ENCODE measurements at regions of chr15 and their contacts with region 1.

Region 1: GRCh38 chr15:63752075-63752684 is 81.6 kb downstream of the HERC1 start:
- DNase-seq: no peak
- ATAC-seq: peak; percentile 73 to 78
- H3K4me3 ChIP-seq: no peak overlapping the region
- H3K27ac ChIP-seq: no peak overlapping the region
- H3K4me1 ChIP-seq: no peaks in the 10 kb centered on the region
- H3K27me3 ChIP-seq: no peaks in the 10 kb centered on the region

Region 2: GRCh38 chr15:63473999-63474809 is 278.0 kb before region 1 on chr15:
- intact Hi-C with region 1: no loop called
- DNase-seq: no peak
- ATAC-seq: peak; percentile 18 to 38
- H3K4me3 ChIP-seq: no peak overlapping the region
- H3K27ac ChIP-seq: no peak overlapping the region
- H3K4me1 ChIP-seq: peaks cover 4% of the 10 kb centered on the region
- H3K27me3 ChIP-seq: no peaks in the 10 kb centered on the region

Region 3: DNA sequence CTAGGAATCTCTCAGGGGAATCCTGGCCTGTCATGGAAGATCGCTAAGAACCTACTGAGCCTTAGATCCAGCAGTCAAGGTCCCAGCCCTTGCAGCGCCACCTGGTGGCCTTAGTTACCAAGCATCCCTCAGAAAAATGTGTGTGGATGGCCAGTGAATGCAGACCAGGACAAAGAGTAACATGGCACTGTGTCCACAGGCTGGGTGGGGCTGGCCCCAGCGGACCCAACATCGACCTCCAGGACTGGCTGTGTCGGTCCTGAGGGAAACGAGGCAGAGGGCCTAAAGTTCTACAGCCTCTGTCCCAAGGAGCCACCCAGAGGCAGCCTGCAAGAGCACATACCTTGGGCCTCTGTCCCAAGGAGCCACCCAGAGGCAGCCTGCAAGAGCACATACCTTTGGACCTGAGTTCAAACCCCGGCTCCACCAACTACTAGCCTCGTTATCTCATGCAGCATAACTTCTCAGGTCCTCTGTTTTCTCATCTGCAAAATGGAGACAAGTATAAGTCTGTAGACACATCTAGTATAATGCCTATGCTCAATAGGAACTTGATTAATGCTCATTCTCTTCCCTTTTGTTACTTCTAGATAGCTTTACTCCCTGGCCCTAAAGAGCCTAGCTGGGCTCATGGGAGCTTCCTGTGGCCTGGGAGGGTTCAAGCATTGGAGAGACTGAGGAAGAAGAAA is 139.0 kb after region 1 on chr15:
- intact Hi-C with region 1: loop called (anchors 2 to 10 kb)
- DNase-seq: peak; percentile 78 to 92 (median 90)
- ATAC-seq: peak; percentile 51 to 70
- H3K4me3 ChIP-seq: no peak overlapping the region
- H3K27ac ChIP-seq: no peak overlapping the region
- H3K4me1 ChIP-seq: no peaks in the 10 kb centered on the region
- H3K27me3 ChIP-seq: no peaks in the 10 kb centered on the region

Region 4: DNA sequence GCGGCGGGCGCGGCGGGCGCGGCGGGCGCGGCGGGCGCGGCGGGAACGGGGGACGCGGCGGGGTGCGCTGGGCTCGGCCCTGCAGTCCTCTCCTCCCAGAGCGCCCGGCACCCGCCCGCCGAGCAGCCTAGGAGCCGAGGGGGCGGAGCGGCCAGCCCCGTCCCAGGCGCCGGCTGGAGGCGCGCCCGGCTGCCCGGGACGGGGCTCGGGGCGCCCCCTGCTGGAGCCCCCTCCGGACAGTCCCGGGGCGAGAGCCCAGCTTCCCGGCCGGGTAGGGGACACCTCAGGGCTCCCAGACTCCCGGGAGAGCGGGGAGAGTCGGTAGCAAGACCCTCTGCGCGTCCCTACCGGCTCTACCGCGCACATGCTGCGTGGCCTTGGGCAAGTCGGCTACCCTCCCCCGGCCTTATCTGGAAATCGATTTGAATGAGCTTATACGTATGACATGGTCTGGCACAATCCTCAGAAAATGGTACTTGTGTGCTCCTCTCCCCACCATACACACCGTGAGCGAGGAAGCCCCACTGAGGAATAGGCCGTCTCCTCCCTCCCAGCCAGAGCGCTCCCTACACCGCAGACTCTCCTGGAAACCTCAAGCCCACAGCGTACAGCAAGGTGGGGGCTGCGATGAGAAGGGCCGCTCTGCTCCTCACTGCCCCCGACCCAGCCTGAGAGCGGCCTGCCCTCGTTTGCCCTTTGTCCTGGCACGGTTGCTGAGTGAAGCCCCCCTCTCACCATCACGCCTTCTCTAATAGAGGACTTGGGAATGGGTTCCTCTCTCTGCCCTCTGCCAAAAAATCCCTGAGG is 294.4 kb after region 1 on chr15 and contains the start of gene DAPK2:
- intact Hi-C with region 1: loop called in 1 of 4 experiments (anchors 5 kb)
- DNase-seq: peak; percentile 79 to 94 (median 91)
- ATAC-seq: peak; percentile 83 to 89
- H3K4me3 ChIP-seq: peak within 1 kb of the TSS; percentile 88
- H3K27ac ChIP-seq: peak within 1 kb of the TSS; percentile 57
- H3K4me1 ChIP-seq: peaks cover 11% of the 10 kb centered on the region
- H3K27me3 ChIP-seq: no peaks in the 10 kb centered on the region
- total RNA-seq, gene DAPK2: 83.5 to 95.1 (median 88.1) TPM

Region 5: DNA sequence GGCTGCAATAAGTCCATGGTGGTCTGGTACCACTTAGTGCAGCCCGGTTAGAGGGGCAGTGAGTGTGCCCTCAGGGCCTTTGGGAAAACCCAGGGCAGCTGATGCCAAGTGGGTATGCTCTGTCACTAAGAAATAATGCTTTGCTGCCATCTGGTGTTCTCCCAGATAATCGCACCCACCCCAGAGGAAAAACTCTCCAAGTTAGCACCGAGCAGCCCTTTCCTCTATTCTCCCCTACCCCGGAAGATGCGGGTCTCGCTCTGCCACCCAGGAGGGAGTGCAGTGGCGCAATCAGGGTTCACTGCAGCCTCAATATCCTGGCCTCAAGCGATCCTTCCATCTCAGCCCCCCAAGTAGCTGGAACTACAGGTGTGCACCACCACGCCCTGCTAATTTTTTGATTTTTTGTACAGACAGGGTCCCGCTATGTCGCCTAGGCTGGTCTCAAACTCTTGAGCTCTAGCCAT is 315.4 kb after region 1 on chr15:
- intact Hi-C with region 1: loop called (anchors 5 to 10 kb)
- DNase-seq: peak; percentile 52 to 75 (median 72)
- ATAC-seq: peak; percentile 75 to 77
- H3K4me3 ChIP-seq: no peak overlapping the region
- H3K27ac ChIP-seq: no peak overlapping the region
- H3K4me1 ChIP-seq: peaks cover 7% of the 10 kb centered on the region
- H3K27me3 ChIP-seq: no peaks in the 10 kb centered on the region

Measured in right cardiac atrium (tissue), 5 donors.